ENCODE measurements at regions of chr15 and their contacts with region 1.

Region 1: DNA sequence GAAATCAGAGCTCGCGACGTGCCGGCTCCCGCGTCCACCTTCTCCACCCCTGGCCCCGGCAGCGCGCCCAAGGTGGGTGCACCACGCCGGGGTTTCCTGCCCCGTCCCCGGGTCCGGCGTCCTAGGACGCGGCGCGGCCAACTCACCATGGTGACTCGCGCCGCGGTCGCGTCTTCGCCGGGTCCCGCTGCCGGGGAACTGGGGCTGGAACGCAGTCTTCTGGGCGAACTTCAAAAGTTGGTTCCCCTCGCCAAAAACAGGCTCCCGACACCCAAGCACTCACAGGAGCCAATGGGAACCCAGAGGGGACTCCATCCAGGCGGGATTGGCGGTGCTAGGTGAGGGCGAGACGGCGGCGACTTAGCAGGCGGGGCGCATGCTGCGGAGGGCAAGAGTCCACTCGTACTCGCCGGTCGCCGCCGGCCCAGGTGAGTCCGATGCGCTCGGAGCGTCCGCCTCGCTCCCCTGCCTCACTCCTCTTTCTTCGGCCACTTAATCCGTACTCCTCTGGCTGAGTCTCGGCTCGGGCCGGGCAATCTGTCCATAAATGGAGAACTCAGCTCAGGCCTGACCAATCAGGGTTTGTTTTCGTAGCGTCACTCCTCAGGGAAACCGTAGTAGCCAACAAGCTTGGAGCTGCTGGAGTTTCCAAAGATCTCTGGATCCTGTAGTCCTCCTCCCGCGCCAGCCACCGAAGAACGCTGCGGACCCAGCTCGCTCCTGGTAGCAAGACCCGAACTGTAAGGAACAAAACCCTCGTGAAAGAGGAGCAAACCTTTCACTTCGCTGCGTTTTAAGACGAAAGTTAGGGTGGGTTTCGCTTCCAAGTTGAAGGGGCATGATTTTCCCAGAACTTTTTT is at the start of gene MYO1E:
- DNase-seq: peak; percentile 88 to 93 (median 91)
- ATAC-seq: peak; percentile 98
- H3K4me3 ChIP-seq: peak within 1 kb of the TSS; percentile 54 to 99 (median 88)
- H3K27ac ChIP-seq: peak within 1 kb of the TSS; percentile 82 to 98 (median 93)
- H3K4me1 ChIP-seq: peaks cover 0 to 29% (median 9%) of the 10 kb centered on the region in 12 donors
- H3K27me3 ChIP-seq: no peaks in the 10 kb centered on the region
- CTCF ChIP-seq: no peak
- POLR2A ChIP-seq: peak; percentile 87 to 96
- total RNA-seq, gene MYO1E: 12.0 to 98.6 (median 28.2) TPM

Region 2: GRCh38 chr15:59174835-59175831 is 197.4 kb before region 1 on chr15:
- intact Hi-C with region 1: loop called in 1 of 10 experiments (anchors 5 kb)
- DNase-seq: peak in 3 of 5 donors; percentile 30 to 61 (median 33)
- ATAC-seq: peak; percentile 78 to 89 (median 85)
- H3K4me3 ChIP-seq: no peak overlapping the region
- H3K27ac ChIP-seq: peak overlapping the region in 4 of 12 donors; percentile 27 to 89 (median 42)
- H3K4me1 ChIP-seq: peaks cover 0 to 57% (median 8%) of the 10 kb centered on the region in 12 donors
- H3K27me3 ChIP-seq: no peaks in the 10 kb centered on the region
- CTCF ChIP-seq: peak; percentile 40 to 68 (median 55)
- POLR2A ChIP-seq: no peak

Region 3: GRCh38 chr15:59437817-59438562 is 65.4 kb after region 1 on chr15 and contains the start of gene FAM81A:
- intact Hi-C with region 1: loop called in 7 of 10 experiments (anchors 2 to 10 kb)
- DNase-seq: peak; percentile 91 to 94 (median 91)
- ATAC-seq: peak; percentile 97 to 99 (median 99)
- H3K4me3 ChIP-seq: peak within 1 kb of the TSS; percentile 50 to 86 (median 60)
- H3K27ac ChIP-seq: peak within 1 kb of the TSS in 8 of 12 donors; percentile 24 to 53 (median 37)
- H3K4me1 ChIP-seq: peaks cover 0 to 21% (median 14%) of the 10 kb centered on the region in 12 donors
- H3K27me3 ChIP-seq: peaks cover 0 to 17% (median 0%) of the 10 kb centered on the region in 9 donors
- CTCF ChIP-seq: no peak
- POLR2A ChIP-seq: no peak
- total RNA-seq, gene FAM81A: 1.1 to 4.5 (median 3.2) TPM